GM10248 (cell line): ENCODE measurements at regions of chr22 and their contacts with region 1.

Region 1: DNA sequence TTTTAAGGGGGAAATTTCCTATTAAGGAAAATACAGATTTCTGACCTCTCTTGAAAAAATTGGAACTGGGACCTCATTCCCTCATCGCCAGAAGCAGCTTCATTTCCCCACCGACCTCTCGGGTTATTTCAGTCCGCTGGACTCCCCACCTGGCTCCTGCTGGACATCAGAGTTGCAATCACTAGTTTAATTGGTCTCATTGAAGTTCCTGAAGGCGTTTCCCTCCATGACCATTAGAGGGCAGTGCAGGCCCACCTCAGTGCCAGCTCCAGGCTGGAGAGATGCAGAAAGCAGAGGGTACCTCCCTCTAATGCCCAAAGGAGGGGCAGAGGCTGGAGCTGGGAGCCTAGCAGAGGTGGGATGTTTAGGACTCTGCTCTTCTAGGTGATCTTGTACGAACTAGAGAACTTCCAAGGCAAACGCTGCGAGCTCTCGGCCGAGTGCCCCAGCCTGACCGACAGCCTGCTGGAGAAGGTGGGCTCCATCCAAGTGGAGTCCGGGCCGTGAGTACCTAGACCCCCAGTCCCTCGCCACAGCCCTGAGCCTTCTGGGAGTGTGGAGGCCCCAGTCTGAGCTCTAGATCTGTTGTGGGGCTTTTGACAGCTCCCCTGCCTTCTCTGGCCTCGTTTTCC is 2.7 kb downstream of the CRYBB3 start:
- DNase-seq: peak; percentile 80
- CTCF ChIP-seq: peak; percentile 90

Region 2: DNA sequence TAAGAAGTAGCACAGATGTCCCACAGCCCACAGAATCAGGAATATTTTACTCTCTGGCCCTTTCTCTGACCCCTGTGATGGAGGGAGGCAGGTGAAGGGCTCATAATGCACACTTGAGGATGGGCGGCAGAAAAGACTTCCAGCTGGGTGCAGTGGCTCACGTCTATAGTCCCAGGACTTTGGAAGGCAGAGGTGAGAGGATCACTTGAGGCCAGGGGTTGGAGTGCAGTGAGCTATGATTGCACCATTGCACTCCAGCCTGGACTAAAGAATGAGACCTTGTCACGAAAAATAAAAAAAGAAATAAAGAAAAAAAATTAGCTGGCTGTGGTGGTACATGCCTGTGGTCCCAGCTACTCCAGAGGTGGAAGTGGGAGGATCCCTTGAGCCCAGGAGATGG is 16.3 kb before region 1 on chr22:
- CTCF ChIA-PET with region 1: interaction called, 12 read pairs
- POLR2A ChIA-PET with region 1: no interaction called
- DNase-seq: no peak
- CTCF ChIP-seq: no peak

Region 3: GRCh38 chr22:25223269-25223838 is 20.9 kb after region 1 on chr22:
- CTCF ChIA-PET with region 1: interaction called, 16 read pairs
- POLR2A ChIA-PET with region 1: no interaction called
- DNase-seq: no peak
- CTCF ChIP-seq: no peak

Region 4: DNA sequence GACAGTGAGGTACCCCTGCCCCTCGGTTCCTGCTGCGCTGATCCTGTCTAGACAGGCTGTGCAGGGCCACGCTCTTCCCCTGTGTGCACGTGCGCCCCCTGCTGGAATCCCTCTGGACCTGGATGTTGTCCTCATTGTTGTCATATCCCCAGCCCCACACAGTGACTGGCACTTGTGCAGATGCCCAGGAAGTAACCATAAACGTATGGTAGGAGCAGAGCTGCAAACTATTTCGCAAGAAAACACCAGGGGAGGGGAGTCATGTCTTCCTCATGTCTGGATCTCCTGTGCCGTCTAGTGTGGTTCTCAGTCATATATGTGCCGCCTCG is 131.7 kb after region 1 on chr22:
- CTCF ChIA-PET with region 1: interaction called, 14 read pairs
- POLR2A ChIA-PET with region 1: no interaction called
- DNase-seq: peak; percentile 41
- CTCF ChIP-seq: peak; percentile 58

Region 5: GRCh38 chr22:25772288-25772687 is 569.9 kb after region 1 on chr22:
- CTCF ChIA-PET with region 1: interaction called, 12 read pairs
- POLR2A ChIA-PET with region 1: no interaction called
- DNase-seq: no peak
- CTCF ChIP-seq: no peak